OCI-LY7 (cell line): ENCODE measurements at regions of chr17 and their contacts with region 1.

Region 1: GRCh38 chr17:80195731-80196529 is 24.2 kb downstream of the SGSH start:
- DNase-seq: peak; percentile 51
- H3K4me3 ChIP-seq: no peak overlapping the region
- H3K27ac ChIP-seq: no peak overlapping the region
- H3K4me1 ChIP-seq: no peaks in the 10 kb centered on the region
- CTCF ChIP-seq: peak; percentile 100

Region 2: DNA sequence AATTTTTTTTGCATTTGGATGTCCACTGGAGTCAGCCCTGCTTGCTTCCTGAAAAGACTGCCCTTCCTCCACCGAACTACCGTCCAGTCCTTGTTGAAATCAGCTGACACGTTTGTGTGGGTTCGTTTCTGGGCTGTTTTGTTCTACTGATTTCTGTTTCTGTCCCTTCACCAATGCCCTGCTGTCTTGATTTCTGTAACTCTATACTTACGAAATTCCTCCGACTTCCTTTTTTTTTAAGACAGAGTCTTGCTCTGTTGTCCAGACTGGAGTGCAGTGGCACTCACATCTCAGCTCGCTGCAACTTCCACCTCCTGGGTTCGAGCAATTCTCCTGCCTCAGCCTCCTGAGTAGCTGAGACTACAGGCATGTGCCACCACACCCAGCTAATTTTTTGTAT is 103.0 kb before region 1 on chr17:
- CTCF ChIA-PET with region 1: no interaction called
- POLR2A ChIA-PET with region 1: no interaction called
- intact Hi-C with region 1: no loop called
- DNase-seq: no peak
- H3K4me3 ChIP-seq: no peak overlapping the region
- H3K27ac ChIP-seq: no peak overlapping the region
- H3K4me1 ChIP-seq: no peaks in the 10 kb centered on the region
- CTCF ChIP-seq: no peak

Region 3: GRCh38 chr17:80252607-80253289 is 56.8 kb after region 1 on chr17:
- CTCF ChIA-PET with region 1: no interaction called
- POLR2A ChIA-PET with region 1: interaction called, 4 read pairs
- intact Hi-C with region 1: loop called (anchors 1 kb)
- DNase-seq: peak; percentile 84
- H3K4me3 ChIP-seq: no peak overlapping the region
- H3K27ac ChIP-seq: no peak overlapping the region
- H3K4me1 ChIP-seq: peaks cover 14% of the 10 kb centered on the region
- CTCF ChIP-seq: peak; percentile 96

Region 4: GRCh38 chr17:80364216-80364618 is 168.3 kb after region 1 on chr17:
- CTCF ChIA-PET with region 1: no interaction called
- POLR2A ChIA-PET with region 1: no interaction called
- intact Hi-C with region 1: loop called (anchors 1 kb)
- DNase-seq: peak; percentile 34
- H3K4me3 ChIP-seq: no peak overlapping the region
- H3K27ac ChIP-seq: no peak overlapping the region
- H3K4me1 ChIP-seq: no peaks in the 10 kb centered on the region
- CTCF ChIP-seq: peak; percentile 79

Region 5: DNA sequence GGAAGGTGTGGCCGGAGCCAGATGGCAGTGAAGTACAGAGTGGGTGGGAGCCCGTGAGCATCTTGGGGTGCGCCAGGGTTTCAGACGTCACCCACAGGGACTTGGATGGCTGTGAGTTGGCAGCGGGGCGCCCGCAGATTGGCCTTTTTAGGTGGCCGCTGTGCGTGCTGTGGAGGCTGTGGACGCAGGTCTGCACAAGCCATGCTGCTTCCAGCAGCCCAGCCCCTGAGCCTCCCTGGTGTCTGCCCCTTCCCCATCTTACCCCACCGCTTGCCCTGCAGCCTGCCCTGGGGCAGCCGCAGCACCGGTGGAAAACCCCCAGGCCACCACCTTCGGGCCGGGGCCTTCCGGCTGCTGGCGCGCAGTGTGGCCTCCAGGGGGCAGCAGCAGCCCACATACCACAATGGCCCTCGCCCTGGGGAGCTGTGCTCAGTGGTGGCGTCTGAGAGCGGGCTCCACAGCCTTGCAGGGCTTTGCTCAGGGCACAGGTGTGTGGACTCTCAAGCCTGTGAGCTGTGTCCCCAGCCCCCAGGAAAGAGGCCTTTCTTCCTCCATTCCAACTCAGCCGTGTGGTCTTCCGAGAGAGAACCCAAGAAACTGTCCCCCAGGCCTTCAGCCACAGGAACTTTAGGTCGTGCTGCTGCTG is 230.9 kb after region 1 on chr17:
- CTCF ChIA-PET with region 1: no interaction called
- POLR2A ChIA-PET with region 1: no interaction called
- intact Hi-C with region 1: no loop called
- DNase-seq: peak; percentile 89
- H3K4me3 ChIP-seq: no peak overlapping the region
- H3K27ac ChIP-seq: no peak overlapping the region
- H3K4me1 ChIP-seq: peaks cover 10% of the 10 kb centered on the region
- CTCF ChIP-seq: peak; percentile 99